Esophagus squamous epithelium (tissue), 5 donors: ENCODE measurements at regions of chr17 and their contacts with region 1.

Region 1: GRCh38 chr17:29369831-29370735 is 20.1 kb upstream of the TAOK1 start:
- DNase-seq: no peak
- H3K4me3 ChIP-seq: peak overlapping the region in 2 of 4 donors; percentile 16 to 46
- H3K27ac ChIP-seq: peak overlapping the region in 3 of 4 donors; percentile 4 to 67 (median 45)
- H3K4me1 ChIP-seq: peaks cover 0 to 8% (median 0%) of the 10 kb centered on the region in 3 donors
- H3K27me3 ChIP-seq: no peaks in the 10 kb centered on the region
- CTCF ChIP-seq: peak; percentile 79 to 85 (median 84)
- POLR2A ChIP-seq: no peak

Region 2: GRCh38 chr17:29162738-29163341 is 207.2 kb before region 1 on chr17:
- intact Hi-C with region 1: no loop called
- DNase-seq: no peak
- H3K4me3 ChIP-seq: no peak overlapping the region
- H3K27ac ChIP-seq: no peak overlapping the region
- H3K4me1 ChIP-seq: peaks cover 17 to 51% (median 25%) of the 10 kb centered on the region in 3 donors
- H3K27me3 ChIP-seq: no peaks in the 10 kb centered on the region
- CTCF ChIP-seq: no peak
- POLR2A ChIP-seq: no peak

Region 3: GRCh38 chr17:29461483-29462206 is 91.6 kb after region 1 on chr17:
- intact Hi-C with region 1: no loop called
- DNase-seq: no peak
- H3K4me3 ChIP-seq: no peak overlapping the region
- H3K27ac ChIP-seq: no peak overlapping the region
- H3K4me1 ChIP-seq: peaks cover 0 to 13% (median 0%) of the 10 kb centered on the region in 3 donors
- H3K27me3 ChIP-seq: no peaks in the 10 kb centered on the region
- CTCF ChIP-seq: no peak
- POLR2A ChIP-seq: no peak

Region 4: DNA sequence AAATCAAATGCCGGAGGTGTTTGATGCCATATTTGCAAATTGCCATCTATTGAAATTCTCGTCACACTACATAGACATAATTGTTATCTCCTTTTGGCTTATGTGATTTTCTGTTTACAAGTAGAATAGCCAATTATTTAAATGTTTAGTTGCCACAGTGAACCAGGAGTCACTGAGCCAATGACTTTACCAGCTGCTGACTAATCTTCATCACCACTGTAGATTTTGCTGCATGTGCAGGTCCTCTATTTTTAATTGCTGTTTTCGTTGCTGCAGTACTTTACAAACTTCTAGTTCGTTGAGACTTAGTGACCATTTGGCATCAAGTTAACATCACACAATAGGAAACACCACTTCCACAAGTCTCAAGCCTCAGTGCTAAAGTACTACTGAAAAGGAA is 174.0 kb after region 1 on chr17:
- intact Hi-C with region 1: loop called (anchors 5 kb)
- DNase-seq: no peak
- H3K4me3 ChIP-seq: no peak overlapping the region
- H3K27ac ChIP-seq: no peak overlapping the region
- H3K4me1 ChIP-seq: no peaks in the 10 kb centered on the region
- H3K27me3 ChIP-seq: no peaks in the 10 kb centered on the region
- CTCF ChIP-seq: no peak
- POLR2A ChIP-seq: no peak

Region 5: DNA sequence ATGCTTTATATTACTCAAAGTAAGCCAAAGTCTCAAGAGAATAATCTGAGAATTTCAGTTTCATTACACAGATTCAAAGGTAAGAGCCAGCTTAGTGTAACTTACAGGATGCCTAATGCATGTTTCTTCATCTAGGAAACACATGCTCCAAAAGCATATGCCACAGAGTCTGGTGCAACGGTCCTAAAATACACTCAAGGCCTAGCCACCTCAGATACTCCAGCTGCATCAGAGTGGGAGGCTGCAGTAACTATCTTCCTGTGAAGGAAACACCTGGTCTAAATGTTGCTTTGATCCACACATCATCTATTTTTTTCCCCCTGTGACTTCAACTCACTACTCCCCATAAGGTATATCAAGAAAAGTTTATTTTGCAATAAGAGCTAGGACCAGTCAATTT is 304.2 kb after region 1 on chr17:
- intact Hi-C with region 1: no loop called
- DNase-seq: no peak
- H3K4me3 ChIP-seq: no peak overlapping the region
- H3K27ac ChIP-seq: no peak overlapping the region
- H3K4me1 ChIP-seq: peaks cover 0 to 18% (median 7%) of the 10 kb centered on the region in 3 donors
- H3K27me3 ChIP-seq: no peaks in the 10 kb centered on the region
- CTCF ChIP-seq: no peak
- POLR2A ChIP-seq: no peak